Naive thymus-derived CD4-positive, alpha-beta T cell (primary cell): ENCODE measurements at regions of chr6 and their contacts with region 1.

Region 1: GRCh38 chr6:170516783-170517616 is 36.1 kb downstream of the PSMB1 start:
- DNase-seq: peak; percentile 9 to 56 (median 45)
- ATAC-seq: peak; percentile 90
- H3K4me3 ChIP-seq: peak overlapping the region; percentile 45
- H3K4me3 Mint-ChIP-seq: peak overlapping the region in 8 of 10 donors; percentile 35 to 78 (median 60)
- H3K27ac ChIP-seq: no peak overlapping the region
- H3K27ac Mint-ChIP-seq: peak overlapping the region in 1 of 9 donors; percentile 13
- H3K4me1 ChIP-seq: peaks cover 0 to 3% of the 10 kb centered on the region in 2 donors
- H3K4me1 Mint-ChIP-seq: peaks cover 0 to 2% (median 0%) of the 10 kb centered on the region in 7 donors
- H3K27me3 ChIP-seq: no peaks in the 10 kb centered on the region
- H3K27me3 Mint-ChIP-seq: peaks cover 12 to 70% (median 40%) of the 10 kb centered on the region in 5 donors

Region 2: GRCh38 chr6:168956884-168957730 is 1559.9 kb before region 1 on chr6:
- CTCF ChIA-PET with region 1: no interaction called
- POLR2A ChIA-PET with region 1: no interaction called
- intact Hi-C with region 1: loop called in 1 of 2 experiments (anchors 5 kb)
- DNase-seq: peak in 6 of 9 donors; percentile 8 to 44 (median 32)
- ATAC-seq: peak; percentile 73
- H3K4me3 ChIP-seq: no peak overlapping the region
- H3K4me3 Mint-ChIP-seq: no peak overlapping the region
- H3K27ac ChIP-seq: no peak overlapping the region
- H3K27ac Mint-ChIP-seq: no peak overlapping the region
- H3K4me1 ChIP-seq: no peaks in the 10 kb centered on the region
- H3K4me1 Mint-ChIP-seq: no peaks in the 10 kb centered on the region
- H3K27me3 ChIP-seq: no peaks in the 10 kb centered on the region
- H3K27me3 Mint-ChIP-seq: peaks cover 4 to 28% (median 24%) of the 10 kb centered on the region in 5 donors